ENCODE measurements at regions of chr6 and their contacts with region 1.

Region 1: GRCh38 chr6:53906842-53907241 is 112.0 kb downstream of the LRRC1 start:
- DNase-seq: no peak
- H3K4me3 ChIP-seq: no peak overlapping the region
- H3K27ac ChIP-seq: no peak overlapping the region
- H3K4me1 ChIP-seq: peaks cover 21% of the 10 kb centered on the region
- H3K27me3 ChIP-seq: no peaks in the 10 kb centered on the region
- CTCF ChIP-seq: no peak
- POLR2A ChIP-seq: no peak

Region 2: GRCh38 chr6:53869952-53870351 is 36.9 kb before region 1 on chr6:
- CTCF ChIA-PET with region 1: interaction called, 3 read pairs
- POLR2A ChIA-PET with region 1: no interaction called
- dilution Hi-C with region 1: no loop called
- intact Hi-C with region 1: loop called (anchors 2 kb)
- DNase-seq: peak; percentile 93
- H3K4me3 ChIP-seq: no peak overlapping the region
- H3K27ac ChIP-seq: no peak overlapping the region
- H3K4me1 ChIP-seq: peaks cover 8% of the 10 kb centered on the region
- H3K27me3 ChIP-seq: no peaks in the 10 kb centered on the region
- CTCF ChIP-seq: no peak
- POLR2A ChIP-seq: no peak

Region 3: DNA sequence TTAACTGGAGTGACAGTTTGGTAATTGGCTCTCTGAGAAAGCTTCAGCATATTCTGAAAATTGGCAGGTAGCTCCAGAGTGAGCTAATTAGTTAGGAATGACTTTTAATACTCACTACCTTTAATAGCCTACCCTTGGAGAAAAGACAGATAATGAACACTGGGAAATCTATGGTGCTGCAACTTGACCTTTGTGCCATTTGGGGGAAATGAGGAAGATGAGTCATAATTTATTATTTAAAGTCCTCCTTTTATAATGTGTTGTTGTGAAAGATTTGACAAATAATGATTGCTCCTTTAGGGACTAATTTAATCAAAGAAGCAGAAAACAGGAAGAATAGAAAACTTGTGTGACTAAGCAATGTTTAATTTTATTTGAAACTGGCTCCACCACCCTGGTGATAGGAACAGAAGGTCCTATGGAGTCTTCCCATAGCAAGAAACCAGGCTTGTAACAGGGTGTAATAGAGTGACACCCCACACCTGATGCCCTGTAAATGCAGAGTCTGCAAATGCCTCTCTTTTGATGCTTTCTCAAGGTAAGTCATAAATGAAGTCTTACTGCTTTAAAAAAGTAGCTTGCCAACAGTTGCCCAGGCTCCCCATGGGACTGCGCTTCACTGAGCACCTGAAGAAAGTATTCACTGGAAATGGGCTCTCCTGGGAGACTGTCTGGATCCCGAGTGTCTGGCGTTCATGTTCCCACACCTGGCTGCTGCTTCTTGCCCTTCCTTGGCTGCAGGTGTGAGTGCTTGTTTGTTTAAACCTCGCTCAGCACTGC is 22.4 kb after region 1 on chr6:
- CTCF ChIA-PET with region 1: interaction called, 4 read pairs
- POLR2A ChIA-PET with region 1: no interaction called
- dilution Hi-C with region 1: no loop called
- intact Hi-C with region 1: loop called (anchors 1 kb)
- DNase-seq: peak; percentile 94
- H3K4me3 ChIP-seq: no peak overlapping the region
- H3K27ac ChIP-seq: peak overlapping the region; percentile 71
- H3K4me1 ChIP-seq: peaks cover 42% of the 10 kb centered on the region
- H3K27me3 ChIP-seq: no peaks in the 10 kb centered on the region
- CTCF ChIP-seq: no peak
- POLR2A ChIP-seq: no peak

Region 4: DNA sequence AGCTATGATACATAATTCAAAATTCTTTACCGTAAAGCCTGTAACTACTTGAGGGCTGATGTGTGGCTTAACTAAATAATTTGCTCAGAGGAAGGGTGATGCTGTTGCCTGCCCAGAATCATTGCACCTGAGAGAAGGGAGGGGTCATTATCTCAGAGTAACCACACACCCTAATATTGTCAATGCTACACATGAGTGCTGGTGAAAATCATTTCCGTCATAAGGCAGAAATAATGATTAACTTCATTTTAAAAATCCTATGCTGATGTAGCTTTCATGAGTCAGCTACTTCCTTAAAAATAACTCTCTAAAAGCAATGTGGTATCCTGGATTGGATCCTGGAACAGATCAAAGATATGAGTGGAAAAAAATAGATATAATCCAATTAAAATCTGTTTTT is 793.3 kb after region 1 on chr6:
- CTCF ChIA-PET with region 1: no interaction called
- POLR2A ChIA-PET with region 1: no interaction called
- dilution Hi-C with region 1: no loop called
- intact Hi-C with region 1: no loop called
- DNase-seq: no peak
- H3K4me3 ChIP-seq: no peak overlapping the region
- H3K27ac ChIP-seq: no peak overlapping the region
- H3K4me1 ChIP-seq: no peaks in the 10 kb centered on the region
- H3K27me3 ChIP-seq: no peaks in the 10 kb centered on the region
- CTCF ChIP-seq: no peak
- POLR2A ChIP-seq: no peak